ENCODE measurements at regions of chr19 and their contacts with region 1.

Region 1: GRCh38 chr19:21141787-21142464 is at the start of gene ZNF431:
- DNase-seq: peak; percentile 95
- H3K4me3 Mint-ChIP-seq: peak within 1 kb of the TSS; percentile 99
- H3K27ac Mint-ChIP-seq: peak within 1 kb of the TSS; percentile 94
- H3K4me1 Mint-ChIP-seq: peaks cover 43% of the 10 kb centered on the region
- H3K27me3 Mint-ChIP-seq: no peaks in the 10 kb centered on the region
- total RNA-seq, gene ZNF431: 13.2 to 16.4 TPM

Region 2: GRCh38 chr19:20167020-20167644 is 974.8 kb before region 1 on chr19 and contains the start of gene ZNF486:
- CTCF ChIA-PET with region 1: no interaction called
- intact Hi-C with region 1: loop called (anchors 5 kb)
- DNase-seq: peak; percentile 98
- H3K4me3 Mint-ChIP-seq: peak within 1 kb of the TSS; percentile 98
- H3K27ac Mint-ChIP-seq: peak within 1 kb of the TSS; percentile 91
- H3K4me1 Mint-ChIP-seq: peaks cover 19% of the 10 kb centered on the region
- H3K27me3 Mint-ChIP-seq: no peaks in the 10 kb centered on the region
- total RNA-seq, gene ZNF486: 11.3 to 13.2 TPM

Region 3: GRCh38 chr19:20776083-20777076 is 365.5 kb before region 1 on chr19 and contains the start of gene ZNF66:
- CTCF ChIA-PET with region 1: no interaction called
- intact Hi-C with region 1: loop called (anchors 2 kb)
- DNase-seq: peak; percentile 98
- H3K4me3 Mint-ChIP-seq: peak within 1 kb of the TSS; percentile 100
- H3K27ac Mint-ChIP-seq: peak within 1 kb of the TSS; percentile 95
- H3K4me1 Mint-ChIP-seq: peaks cover 18% of the 10 kb centered on the region
- H3K27me3 Mint-ChIP-seq: no peaks in the 10 kb centered on the region
- total RNA-seq, gene ZNF66: 3.9 to 4.9 TPM

Region 4: DNA sequence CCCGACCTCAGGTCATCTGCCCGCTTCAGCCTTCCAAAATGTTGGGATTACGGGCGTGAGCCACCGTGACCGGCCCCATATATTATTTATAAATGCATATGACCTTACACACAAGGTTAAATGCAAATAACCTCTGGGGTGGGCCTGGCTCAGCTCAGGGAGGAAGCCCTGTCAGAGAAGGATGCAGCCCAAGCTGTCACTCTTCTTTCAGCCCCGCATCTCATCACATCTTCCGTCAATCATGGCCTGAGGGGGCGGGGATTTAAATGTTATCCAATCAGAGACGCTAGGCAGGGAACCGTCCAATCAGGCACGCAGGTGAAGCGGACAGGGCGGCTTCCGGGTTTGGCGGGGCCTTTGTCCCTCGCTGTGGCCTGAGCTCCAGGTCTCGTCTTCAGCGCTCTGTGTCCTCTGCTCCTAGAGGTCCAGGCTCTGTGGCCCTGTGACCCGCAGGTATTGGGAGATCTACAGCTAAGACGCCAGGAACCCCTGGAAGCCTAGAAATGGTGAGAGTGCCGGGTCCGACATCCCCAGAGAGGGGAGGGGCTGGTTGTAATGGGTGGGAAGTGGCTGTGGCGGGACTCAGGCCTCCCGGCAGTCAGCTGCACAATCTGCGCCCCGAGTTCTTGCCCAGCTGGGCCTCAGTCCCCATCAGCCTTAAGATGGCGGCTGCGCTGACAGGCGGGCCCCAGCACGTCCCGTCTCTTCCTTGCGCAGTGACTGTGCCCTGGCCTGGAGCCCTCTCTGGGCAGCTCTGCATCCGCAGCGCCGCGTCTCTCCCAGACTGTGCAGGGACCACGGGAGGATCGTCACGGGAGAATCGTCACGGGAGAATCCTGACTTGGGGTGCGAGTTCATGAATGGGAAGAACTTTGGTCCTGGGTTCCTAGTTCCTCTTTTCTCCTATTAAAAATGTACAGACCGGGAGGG is 121.4 kb before region 1 on chr19 and contains the start of gene ZNF430:
- CTCF ChIA-PET with region 1: interaction called, 3 read pairs
- intact Hi-C with region 1: loop called (anchors 5 kb)
- DNase-seq: peak; percentile 98
- H3K4me3 Mint-ChIP-seq: peak within 1 kb of the TSS; percentile 98
- H3K27ac Mint-ChIP-seq: peak within 1 kb of the TSS; percentile 98
- H3K4me1 Mint-ChIP-seq: peaks cover 42% of the 10 kb centered on the region
- H3K27me3 Mint-ChIP-seq: no peaks in the 10 kb centered on the region
- total RNA-seq, gene ZNF430: 18.2 to 19.5 TPM

Region 5: GRCh38 chr19:21197590-21198295 is 55.8 kb after region 1 on chr19:
- CTCF ChIA-PET with region 1: no interaction called
- intact Hi-C with region 1: no loop called
- DNase-seq: no peak
- H3K4me3 Mint-ChIP-seq: no peak overlapping the region
- H3K27ac Mint-ChIP-seq: no peak overlapping the region
- H3K4me1 Mint-ChIP-seq: no peaks in the 10 kb centered on the region
- H3K27me3 Mint-ChIP-seq: peaks cover under 1% of the 10 kb centered on the region

Region 6: GRCh38 chr19:21328885-21329605 is 187.1 kb after region 1 on chr19 and contains the start of gene ZNF708:
- CTCF ChIA-PET with region 1: no interaction called
- intact Hi-C with region 1: loop called (anchors 2 kb)
- DNase-seq: peak; percentile 90
- H3K4me3 Mint-ChIP-seq: peak within 1 kb of the TSS; percentile 98
- H3K27ac Mint-ChIP-seq: peak within 1 kb of the TSS; percentile 98
- H3K4me1 Mint-ChIP-seq: peaks cover 33% of the 10 kb centered on the region
- H3K27me3 Mint-ChIP-seq: no peaks in the 10 kb centered on the region
- total RNA-seq, gene ZNF708: 7.8 to 10.9 TPM

Region 7: GRCh38 chr19:21474671-21475181 is 332.8 kb after region 1 on chr19:
- CTCF ChIA-PET with region 1: no interaction called
- intact Hi-C with region 1: loop called (anchors 5 kb)
- DNase-seq: peak; percentile 93
- H3K4me3 Mint-ChIP-seq: peak overlapping the region; percentile 83
- H3K27ac Mint-ChIP-seq: no peak overlapping the region
- H3K4me1 Mint-ChIP-seq: peaks cover 4% of the 10 kb centered on the region
- H3K27me3 Mint-ChIP-seq: no peaks in the 10 kb centered on the region

Region 8: DNA sequence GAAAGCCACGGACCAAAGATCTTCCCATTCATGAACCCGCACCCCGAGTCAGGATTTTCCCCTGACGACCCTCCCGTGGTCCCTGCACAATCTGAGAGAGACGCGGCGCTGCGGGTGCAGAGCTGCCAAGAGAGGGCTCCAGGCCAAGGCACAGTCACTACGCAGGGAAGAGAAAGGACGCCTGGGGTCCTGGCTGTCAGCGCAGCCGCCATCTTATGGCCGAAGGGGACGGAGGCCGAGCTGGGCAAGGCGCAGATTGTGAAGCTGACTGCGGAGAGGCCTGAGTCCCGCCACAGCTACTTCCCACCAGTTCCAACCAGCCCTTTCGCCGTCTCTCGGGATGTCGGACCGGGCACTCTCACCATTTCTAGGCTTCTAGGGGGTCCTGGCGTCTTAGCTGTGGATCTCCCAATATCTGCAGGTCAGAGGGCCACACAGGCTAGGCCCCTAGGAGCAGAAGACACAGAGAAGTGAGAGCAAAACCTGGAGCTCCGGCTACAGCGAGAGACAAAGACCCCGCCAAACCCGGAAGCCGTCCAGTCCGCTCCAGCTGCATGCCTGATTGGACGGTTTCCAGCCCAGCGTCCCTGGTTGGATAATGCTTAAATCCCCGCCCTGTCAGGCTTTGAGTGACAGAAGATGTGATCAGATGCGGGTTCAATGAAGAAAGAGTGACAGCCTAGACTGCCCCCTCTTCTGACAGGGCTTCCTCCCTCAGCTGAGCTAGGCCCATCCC is 625.3 kb after region 1 on chr19 and contains the start of gene ZNF100:
- CTCF ChIA-PET with region 1: no interaction called
- intact Hi-C with region 1: loop called (anchors 5 kb)
- DNase-seq: peak; percentile 94
- H3K4me3 Mint-ChIP-seq: peak within 1 kb of the TSS; percentile 78
- H3K27ac Mint-ChIP-seq: peak within 1 kb of the TSS; percentile 84
- H3K4me1 Mint-ChIP-seq: peaks cover 24% of the 10 kb centered on the region
- H3K27me3 Mint-ChIP-seq: no peaks in the 10 kb centered on the region
- total RNA-seq, gene ZNF100: 19.3 to 22.7 TPM